K562 (cell line): ENCODE measurements at regions of chr13 and their contacts with region 1.

Region 1: DNA sequence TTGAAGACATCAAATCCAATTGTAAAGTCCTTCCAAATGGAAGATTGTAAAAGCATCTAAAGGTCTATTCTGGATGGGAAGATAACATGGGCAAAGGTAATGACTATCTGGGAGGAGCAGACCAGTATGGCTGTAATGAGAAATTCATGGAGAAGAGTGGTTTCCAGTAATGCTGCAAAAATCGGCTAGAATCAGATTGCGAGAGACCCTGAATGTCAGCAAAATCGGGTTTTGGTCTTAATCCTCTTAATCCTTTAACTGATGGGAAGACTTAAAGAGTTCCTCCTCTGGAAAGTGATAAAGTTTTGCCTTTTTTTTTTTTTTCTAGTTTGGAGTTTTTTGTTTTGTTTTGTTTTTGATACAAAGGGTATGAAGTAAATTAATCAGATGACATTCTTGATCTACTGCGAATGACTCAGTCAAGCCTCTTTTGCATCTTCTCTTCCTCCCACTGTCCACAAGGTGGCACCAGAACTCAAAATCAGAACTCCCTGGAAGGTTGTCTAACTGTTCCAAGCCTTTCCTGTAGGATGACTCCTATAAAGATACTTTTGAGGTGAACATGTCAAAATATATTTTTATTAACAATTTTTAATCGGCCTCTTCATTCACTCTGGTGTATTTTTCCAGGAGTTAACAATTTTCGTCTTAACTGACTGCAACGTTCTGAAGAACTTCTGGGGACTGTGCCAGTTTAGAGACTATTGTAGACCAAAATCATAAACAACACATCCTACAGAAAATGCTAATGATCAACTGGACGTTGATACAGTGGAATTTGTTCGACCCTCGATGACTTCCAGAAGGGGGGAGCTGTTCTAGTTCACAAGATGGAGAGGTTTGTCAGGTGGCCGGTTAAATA is 213.3 kb upstream of the MIR17HG start:
- DNase-seq: peak; percentile 78 to 96 (median 90)
- ATAC-seq: peak; percentile 94
- H3K4me3 ChIP-seq: no peak overlapping the region
- H3K27ac ChIP-seq: no peak overlapping the region
- H3K4me1 ChIP-seq: no peaks in the 10 kb centered on the region
- H3K27me3 ChIP-seq: no peaks in the 10 kb centered on the region
- CTCF ChIP-seq: peak in 1 of 3 experiments; percentile 98; a peak in 2 of 6 replicates
- EP300 ChIP-seq: 0 out of 2 replicates have a peak, but pooled peaks have one; percentile 26
- POLR2A ChIP-seq: no peak
- RAD21 ChIP-seq: peak; percentile 95 to 97

Region 2: DNA sequence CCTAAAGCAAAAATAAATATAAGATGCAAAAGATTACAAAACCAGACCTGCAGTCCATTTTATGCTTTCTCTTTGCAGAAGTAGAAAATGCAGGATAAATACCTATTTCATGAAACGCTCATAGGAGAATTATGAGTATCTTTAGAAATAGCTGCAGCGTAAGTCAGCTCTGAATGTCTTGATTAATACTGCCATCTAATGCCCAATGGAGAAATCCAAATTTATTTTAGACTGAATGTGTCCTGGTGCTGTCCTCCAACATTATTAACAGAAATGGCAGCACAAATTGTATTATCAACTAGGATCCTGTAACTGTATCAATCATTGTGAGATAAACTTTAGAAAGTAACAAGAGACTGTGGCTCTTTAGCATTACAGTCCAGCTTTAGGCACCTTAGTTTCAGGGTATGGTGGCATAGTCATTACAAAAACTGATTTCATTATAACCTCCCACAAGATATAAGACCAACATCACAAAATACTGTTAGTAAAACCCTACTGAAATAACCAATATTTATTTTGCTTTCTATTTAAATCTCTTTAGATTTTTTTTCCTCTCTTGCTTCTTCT is 51.2 kb after region 1 on chr13:
- CTCF ChIA-PET with region 1: interaction called, 4 read pairs
- POLR2A ChIA-PET with region 1: no interaction called
- in situ Hi-C with region 1: no loop called
- intact Hi-C with region 1: loop called (anchors 2 kb)
- DNase-seq: peak in 1 of 4 experiments; percentile 28
- ATAC-seq: peak; percentile 40; the same call in 1 of the 3 replicates
- H3K4me3 ChIP-seq: no peak overlapping the region
- H3K27ac ChIP-seq: no peak overlapping the region
- H3K4me1 ChIP-seq: no peaks in the 10 kb centered on the region
- H3K27me3 ChIP-seq: no peaks in the 10 kb centered on the region
- CTCF ChIP-seq: peak in 2 of 3 experiments; percentile 33 to 50; a peak in 3 of 6 replicates
- EP300 ChIP-seq: no peak
- POLR2A ChIP-seq: no peak
- RAD21 ChIP-seq: peak; percentile 51 to 73

Region 3: DNA sequence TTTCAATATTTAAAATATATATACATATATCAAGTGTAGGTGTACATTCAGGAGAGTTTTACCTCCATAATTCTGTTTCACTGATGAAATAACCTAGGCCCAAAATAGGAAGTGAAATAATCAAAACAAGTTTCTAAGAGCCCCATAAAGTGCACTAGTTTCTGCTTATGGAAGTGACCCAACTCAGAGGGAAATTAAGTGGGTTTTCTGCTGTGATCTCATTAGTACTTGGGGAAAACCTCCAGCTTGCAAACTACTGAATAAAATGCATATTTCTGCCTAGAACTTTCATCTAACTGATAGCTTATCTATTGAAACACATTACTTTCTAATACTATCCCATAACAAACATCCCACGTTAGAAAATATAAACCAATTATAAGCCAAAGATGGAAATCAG is 167.9 kb after region 1 on chr13:
- CTCF ChIA-PET with region 1: no interaction called
- POLR2A ChIA-PET with region 1: no interaction called
- in situ Hi-C with region 1: no loop called
- intact Hi-C with region 1: no loop called
- DNase-seq: no peak
- ATAC-seq: no peak
- H3K4me3 ChIP-seq: no peak overlapping the region
- H3K27ac ChIP-seq: no peak overlapping the region
- H3K4me1 ChIP-seq: no peaks in the 10 kb centered on the region
- H3K27me3 ChIP-seq: no peaks in the 10 kb centered on the region
- CTCF ChIP-seq: no peak
- EP300 ChIP-seq: no peak
- POLR2A ChIP-seq: no peak
- RAD21 ChIP-seq: no peak

Region 4: GRCh38 chr13:91722267-91722884 is 588.2 kb after region 1 on chr13:
- CTCF ChIA-PET with region 1: interaction called, 7 read pairs
- POLR2A ChIA-PET with region 1: no interaction called
- in situ Hi-C with region 1: no loop called
- intact Hi-C with region 1: loop called (anchors 1 kb)
- DNase-seq: peak; percentile 57 to 67 (median 63)
- ATAC-seq: peak; percentile 48; the same call in 2 of the 3 replicates
- H3K4me3 ChIP-seq: no peak overlapping the region
- H3K27ac ChIP-seq: no peak overlapping the region
- H3K4me1 ChIP-seq: no peaks in the 10 kb centered on the region
- H3K27me3 ChIP-seq: no peaks in the 10 kb centered on the region
- CTCF ChIP-seq: peak in 2 of 3 experiments; percentile 67 to 86; a peak in 4 of 6 replicates
- EP300 ChIP-seq: no peak
- POLR2A ChIP-seq: no peak
- RAD21 ChIP-seq: peak; percentile 80 to 88

Region 5: DNA sequence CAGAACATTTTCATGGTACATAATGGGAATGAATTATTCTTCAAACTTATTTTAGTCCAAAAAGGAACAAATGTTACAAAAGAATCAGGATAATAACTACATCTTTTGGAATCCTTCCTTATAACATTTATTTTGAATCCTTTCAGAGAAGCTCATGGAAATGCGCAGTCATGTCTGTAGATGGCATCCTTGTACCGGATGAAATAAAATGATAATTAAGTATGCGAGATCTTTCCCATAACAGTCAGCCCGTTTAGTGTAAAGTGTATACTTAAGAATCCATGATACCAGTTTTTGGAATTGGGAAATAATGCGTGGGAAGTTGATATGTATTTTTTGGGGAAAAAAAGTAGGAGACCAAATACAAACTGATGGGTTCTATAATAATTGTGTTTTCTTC is 683.1 kb after region 1 on chr13:
- CTCF ChIA-PET with region 1: no interaction called
- POLR2A ChIA-PET with region 1: no interaction called
- in situ Hi-C with region 1: no loop called
- intact Hi-C with region 1: loop called (anchors 10 kb)
- DNase-seq: peak; percentile 7 to 38 (median 16)
- ATAC-seq: peak; percentile 45; the same call in 1 of the 3 replicates
- H3K4me3 ChIP-seq: no peak overlapping the region
- H3K27ac ChIP-seq: no peak overlapping the region
- H3K4me1 ChIP-seq: no peaks in the 10 kb centered on the region
- H3K27me3 ChIP-seq: no peaks in the 10 kb centered on the region
- CTCF ChIP-seq: peak in 1 of 3 experiments; percentile 54; a peak in 2 of 6 replicates
- EP300 ChIP-seq: no peak
- POLR2A ChIP-seq: no peak
- RAD21 ChIP-seq: peak; percentile 29 to 54; a peak in 3 of 4 replicates